Panc1 (cell line): ENCODE measurements at regions of chr4 and their contacts with region 1.

Region 1: DNA sequence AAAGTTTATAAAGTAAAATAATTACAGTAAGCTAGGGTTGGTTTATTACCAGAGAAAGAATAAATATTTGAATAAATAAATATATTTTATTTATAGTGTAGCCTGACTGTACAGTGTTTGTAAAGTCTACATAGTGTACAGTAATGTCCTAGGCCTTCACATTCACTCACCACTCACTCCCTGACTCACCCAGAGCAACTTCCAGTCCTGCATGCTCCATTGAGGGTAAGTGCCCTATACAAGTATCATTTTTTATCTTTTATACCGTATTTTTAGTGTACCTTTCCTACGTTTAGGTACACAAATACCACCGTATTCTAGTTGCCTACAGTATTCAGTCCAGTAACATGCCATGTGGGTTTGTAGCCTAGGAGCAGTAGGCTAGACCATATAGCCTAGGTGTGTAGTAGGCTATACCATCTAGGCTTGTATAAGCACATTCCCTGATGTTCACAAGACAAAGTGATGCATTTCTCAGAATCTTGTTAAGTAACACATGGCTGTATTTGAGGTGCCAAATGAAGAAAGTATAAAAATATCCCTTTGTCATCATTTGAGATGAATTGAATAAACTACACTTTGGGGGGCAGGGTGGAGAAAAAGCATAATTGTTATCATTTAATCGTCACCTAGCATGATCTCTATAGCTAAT is 14.7 kb upstream of the KLHL8 start:
- DNase-seq: no peak
- ATAC-seq: peak; percentile 58; the same call in 1 of the 2 replicates
- H3K4me3 ChIP-seq: peak overlapping the region; percentile 39 to 52
- H3K27ac ChIP-seq: no peak overlapping the region; the same call in 1 of the 2 replicates
- H3K4me1 ChIP-seq: no peaks in the 10 kb centered on the region
- H3K27me3 ChIP-seq: no peaks in the 10 kb centered on the region
- CTCF ChIP-seq: no peak

Region 2: DNA sequence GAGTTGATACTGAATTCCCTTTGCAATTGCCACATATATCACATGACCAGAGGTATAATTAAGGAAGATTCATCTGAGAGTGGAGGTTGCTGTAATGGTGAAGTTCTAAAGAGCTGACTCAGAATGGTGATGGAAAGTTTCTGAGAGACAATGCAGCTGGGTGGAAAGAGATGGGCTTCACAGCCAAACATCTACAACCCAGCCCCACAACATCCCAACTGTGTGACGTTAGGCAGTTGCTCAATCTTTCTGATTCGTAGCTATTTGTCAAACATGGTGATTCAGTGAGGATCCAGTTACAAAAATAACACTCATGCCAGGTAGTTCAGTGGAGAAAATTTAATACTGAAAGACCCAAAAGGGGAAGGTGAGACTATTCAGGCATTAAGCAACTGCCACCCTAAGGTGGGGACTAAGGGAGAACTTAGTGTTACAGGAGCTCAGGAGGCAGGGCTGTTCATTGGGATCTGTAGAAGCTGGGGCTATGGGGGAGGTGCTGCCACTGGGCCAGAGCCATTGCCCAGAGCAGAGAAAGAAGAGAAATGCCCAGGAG is 307.2 kb before region 1 on chr4:
- CTCF ChIA-PET with region 1: interaction called, 8 read pairs
- POLR2A ChIA-PET with region 1: no interaction called
- in situ Hi-C with region 1: no loop called
- intact Hi-C with region 1: loop called (anchors 10 kb)
- DNase-seq: no peak
- ATAC-seq: no peak
- H3K4me3 ChIP-seq: no peak overlapping the region
- H3K27ac ChIP-seq: no peak overlapping the region
- H3K4me1 ChIP-seq: no peaks in the 10 kb centered on the region
- H3K27me3 ChIP-seq: no peaks in the 10 kb centered on the region
- CTCF ChIP-seq: no peak

Region 3: DNA sequence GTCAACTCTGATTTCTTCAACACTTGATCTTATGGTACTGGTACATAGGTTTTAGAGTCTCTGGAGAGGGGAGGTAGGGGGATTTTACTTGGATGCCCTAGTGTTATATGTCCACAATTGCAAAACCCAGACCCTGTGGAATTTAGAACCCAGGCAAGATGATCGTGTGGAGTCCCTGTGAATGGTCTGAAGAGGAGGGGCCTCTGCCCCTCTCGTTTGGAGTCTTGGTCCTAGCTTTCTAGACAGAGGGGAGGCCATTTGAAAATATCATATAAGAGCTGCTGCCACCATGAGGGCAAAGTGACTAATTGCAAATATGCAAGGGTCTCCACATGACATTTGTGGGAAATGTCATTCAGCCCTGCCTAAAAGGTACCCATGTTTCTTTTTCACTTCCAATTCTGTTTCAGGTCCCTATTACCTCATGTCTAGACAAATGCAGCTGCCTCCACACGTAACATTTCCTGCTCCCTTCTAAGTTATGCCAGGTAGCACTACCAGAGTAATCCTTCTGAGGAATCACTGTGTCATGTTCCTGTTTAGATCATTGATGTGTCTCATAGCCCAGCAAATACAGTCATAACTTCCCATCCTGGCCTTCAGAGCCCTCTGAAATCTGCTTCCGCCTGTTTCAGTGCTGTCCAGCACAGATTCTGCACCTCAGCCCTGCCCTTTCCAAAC is 141.6 kb before region 1 on chr4:
- CTCF ChIA-PET with region 1: interaction called, 12 read pairs
- POLR2A ChIA-PET with region 1: no interaction called
- in situ Hi-C with region 1: no loop called
- intact Hi-C with region 1: no loop called
- DNase-seq: peak; percentile 27
- ATAC-seq: peak; percentile 85
- H3K4me3 ChIP-seq: no peak overlapping the region
- H3K27ac ChIP-seq: no peak overlapping the region
- H3K4me1 ChIP-seq: peaks cover 3% of the 10 kb centered on the region; the same call in 1 of the 2 replicates
- H3K27me3 ChIP-seq: no peaks in the 10 kb centered on the region
- CTCF ChIP-seq: peak; percentile 74

Region 4: GRCh38 chr4:87108142-87108546 is 127.0 kb before region 1 on chr4:
- CTCF ChIA-PET with region 1: interaction called, 13 read pairs
- POLR2A ChIA-PET with region 1: no interaction called
- in situ Hi-C with region 1: no loop called
- intact Hi-C with region 1: no loop called
- DNase-seq: peak; percentile 41
- ATAC-seq: peak; percentile 94
- H3K4me3 ChIP-seq: no peak overlapping the region
- H3K27ac ChIP-seq: no peak overlapping the region
- H3K4me1 ChIP-seq: peaks cover 4% of the 10 kb centered on the region; the same call in 1 of the 2 replicates
- H3K27me3 ChIP-seq: no peaks in the 10 kb centered on the region
- CTCF ChIP-seq: no peak

Region 5: GRCh38 chr4:87150498-87151261 is 84.5 kb before region 1 on chr4:
- CTCF ChIA-PET with region 1: interaction called, 4 read pairs
- POLR2A ChIA-PET with region 1: no interaction called
- in situ Hi-C with region 1: no loop called
- intact Hi-C with region 1: loop called (anchors 1 kb)
- DNase-seq: peak; percentile 57
- ATAC-seq: peak; percentile 86
- H3K4me3 ChIP-seq: no peak overlapping the region
- H3K27ac ChIP-seq: no peak overlapping the region
- H3K4me1 ChIP-seq: no peaks in the 10 kb centered on the region
- H3K27me3 ChIP-seq: no peaks in the 10 kb centered on the region
- CTCF ChIP-seq: peak; percentile 71; the same call in 1 of the 2 replicates